ENCODE measurements at regions of chr3 and their contacts with region 1.

Region 1: DNA sequence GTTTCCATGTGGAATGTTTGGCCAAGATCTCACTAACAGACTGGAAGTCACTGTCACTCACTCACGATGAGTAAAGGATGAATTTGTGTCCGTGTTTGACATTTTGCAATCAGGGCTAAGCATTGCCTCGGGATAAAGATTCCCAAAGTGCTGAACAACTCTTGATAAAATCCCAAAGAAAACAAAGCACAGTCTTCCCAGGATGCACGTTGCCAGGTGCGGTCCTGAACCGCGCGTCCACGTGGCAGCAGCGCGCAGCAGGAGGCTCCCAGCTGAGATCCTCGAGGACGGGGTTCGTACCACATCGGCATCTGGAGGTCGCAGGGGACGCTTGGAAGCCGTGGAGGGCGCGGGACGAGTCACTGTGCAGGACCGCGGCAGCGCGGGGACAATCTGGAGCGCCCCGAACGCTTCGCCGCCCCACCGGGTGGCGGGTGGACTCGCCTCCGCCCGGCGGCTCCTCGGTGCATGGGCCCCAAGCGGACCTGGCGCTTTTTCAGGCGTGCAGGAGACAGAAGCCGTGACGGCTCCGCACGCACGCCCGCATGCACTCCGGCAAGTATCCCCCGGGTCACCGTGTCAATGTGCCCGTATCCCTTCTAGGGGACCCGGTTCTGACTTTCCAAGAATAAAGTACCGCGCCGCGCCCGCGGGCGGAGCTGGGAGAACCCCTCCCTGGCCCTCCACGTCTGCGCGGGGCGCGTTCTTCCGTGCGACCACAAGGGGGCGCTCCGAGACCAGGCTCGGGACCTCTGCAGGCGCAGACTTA is 17.7 kb downstream of the CPN2 start:
- DNase-seq: peak; percentile 78 to 94 (median 87)
- ATAC-seq: peak; percentile 98
- H3K4me3 ChIP-seq: peak overlapping the region; percentile 42
- H3K4me3 Mint-ChIP-seq: peak overlapping the region; percentile 60
- H3K27ac ChIP-seq: no peak overlapping the region
- H3K27ac Mint-ChIP-seq: no peak overlapping the region
- H3K4me1 ChIP-seq: peaks cover 10% of the 10 kb centered on the region
- H3K4me1 Mint-ChIP-seq: peaks cover 4% of the 10 kb centered on the region
- H3K27me3 ChIP-seq: peaks cover 6 to 17% of the 10 kb centered on the region in 2 experiments
- H3K27me3 Mint-ChIP-seq: peaks cover 36% of the 10 kb centered on the region
- CTCF ChIP-seq: peak; percentile 99

Region 2: DNA sequence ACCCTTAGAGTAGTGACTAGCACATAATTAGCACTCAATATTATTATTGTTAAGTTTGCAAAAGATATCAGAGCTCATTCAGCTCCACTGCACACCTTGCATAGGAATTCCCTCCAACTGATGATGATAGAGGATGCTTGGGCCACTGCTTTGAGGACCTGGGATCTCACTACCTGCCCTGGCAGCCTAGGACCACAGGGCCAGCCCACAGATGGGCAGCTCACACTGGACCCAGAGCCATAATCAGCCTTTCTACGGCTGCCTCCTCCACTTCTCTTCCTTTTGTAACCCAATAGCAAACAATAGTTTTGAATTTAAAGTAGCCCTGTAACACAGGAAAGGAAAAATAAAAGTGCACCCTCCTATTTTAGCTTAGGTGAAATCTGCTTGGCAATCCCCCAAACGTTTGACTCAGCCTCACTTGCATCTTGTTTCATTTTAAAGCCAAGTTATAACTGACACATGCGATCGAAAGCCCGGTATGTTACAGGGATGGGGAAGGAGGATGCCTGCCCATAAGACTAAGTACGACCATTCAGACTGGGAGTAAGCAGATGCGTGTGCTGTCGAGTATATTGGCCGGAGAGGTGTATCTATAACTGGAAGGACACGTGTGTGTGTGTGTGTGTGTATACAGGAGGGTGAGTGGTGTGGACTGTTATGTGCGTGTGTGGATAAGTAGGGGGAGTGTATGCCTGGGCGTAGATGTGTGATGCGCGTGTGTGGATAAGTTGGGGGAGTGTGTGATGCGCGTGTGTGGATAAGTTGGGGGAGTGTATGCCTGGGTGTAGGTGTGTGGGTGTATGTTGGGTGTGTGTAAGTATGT is 48.2 kb before region 1 on chr3:
- CTCF ChIA-PET with region 1: no interaction called
- POLR2A ChIA-PET with region 1: no interaction called
- intact Hi-C with region 1: no loop called
- DNase-seq: peak in 1 of 14 experiments; percentile 8
- ATAC-seq: no peak
- H3K4me3 ChIP-seq: no peak overlapping the region
- H3K4me3 Mint-ChIP-seq: no peak overlapping the region
- H3K27ac ChIP-seq: no peak overlapping the region
- H3K27ac Mint-ChIP-seq: no peak overlapping the region
- H3K4me1 ChIP-seq: no peaks in the 10 kb centered on the region
- H3K4me1 Mint-ChIP-seq: no peaks in the 10 kb centered on the region
- H3K27me3 ChIP-seq: peaks cover 0 to 4% of the 10 kb centered on the region in 2 experiments
- H3K27me3 Mint-ChIP-seq: peaks cover 5% of the 10 kb centered on the region
- CTCF ChIP-seq: no peak

Region 3: GRCh38 chr3:194344012-194344411 is 10.6 kb after region 1 on chr3:
- CTCF ChIA-PET with region 1: interaction called, 19 read pairs
- POLR2A ChIA-PET with region 1: no interaction called
- intact Hi-C with region 1: loop called in 1 of 2 experiments (anchors 1 kb)
- DNase-seq: peak; percentile 60 to 85 (median 66)
- ATAC-seq: peak; percentile 80
- H3K4me3 ChIP-seq: no peak overlapping the region
- H3K4me3 Mint-ChIP-seq: no peak overlapping the region
- H3K27ac ChIP-seq: no peak overlapping the region
- H3K27ac Mint-ChIP-seq: no peak overlapping the region
- H3K4me1 ChIP-seq: no peaks in the 10 kb centered on the region
- H3K4me1 Mint-ChIP-seq: no peaks in the 10 kb centered on the region
- H3K27me3 ChIP-seq: no peaks in the 10 kb centered on the region
- H3K27me3 Mint-ChIP-seq: peaks cover 14% of the 10 kb centered on the region
- CTCF ChIP-seq: peak; percentile 98

Region 4: GRCh38 chr3:194395778-194396547 is 62.6 kb after region 1 on chr3:
- CTCF ChIA-PET with region 1: interaction called, 13 read pairs
- POLR2A ChIA-PET with region 1: interaction called, 11 read pairs
- intact Hi-C with region 1: loop called in 1 of 2 experiments (anchors 2 kb)
- DNase-seq: peak; percentile 40 to 81 (median 62)
- ATAC-seq: peak; percentile 79
- H3K4me3 ChIP-seq: peak overlapping the region; percentile 63
- H3K4me3 Mint-ChIP-seq: peak overlapping the region; percentile 90
- H3K27ac ChIP-seq: peak overlapping the region in 1 of 2 donors; percentile 50
- H3K27ac Mint-ChIP-seq: peak overlapping the region; percentile 94
- H3K4me1 ChIP-seq: peaks cover 39% of the 10 kb centered on the region
- H3K4me1 Mint-ChIP-seq: peaks cover 56% of the 10 kb centered on the region
- H3K27me3 ChIP-seq: peaks cover 0 to 10% of the 10 kb centered on the region in 2 experiments
- H3K27me3 Mint-ChIP-seq: no peaks in the 10 kb centered on the region
- CTCF ChIP-seq: no peak

Region 5: GRCh38 chr3:194404365-194405140 is 71.2 kb after region 1 on chr3:
- CTCF ChIA-PET with region 1: interaction called, 23 read pairs
- POLR2A ChIA-PET with region 1: interaction called, 4 read pairs
- intact Hi-C with region 1: loop called (anchors 1 kb)
- DNase-seq: peak in 10 of 14 experiments; percentile 13 to 81 (median 28)
- ATAC-seq: peak; percentile 84
- H3K4me3 ChIP-seq: no peak overlapping the region
- H3K4me3 Mint-ChIP-seq: peak overlapping the region; percentile 6
- H3K27ac ChIP-seq: no peak overlapping the region
- H3K27ac Mint-ChIP-seq: no peak overlapping the region
- H3K4me1 ChIP-seq: peaks cover 4% of the 10 kb centered on the region
- H3K4me1 Mint-ChIP-seq: peaks cover 16% of the 10 kb centered on the region
- H3K27me3 ChIP-seq: no peaks in the 10 kb centered on the region
- H3K27me3 Mint-ChIP-seq: no peaks in the 10 kb centered on the region
- CTCF ChIP-seq: peak; percentile 90

Region 6: GRCh38 chr3:194465920-194466570 is 132.6 kb after region 1 on chr3:
- CTCF ChIA-PET with region 1: no interaction called
- POLR2A ChIA-PET with region 1: no interaction called
- intact Hi-C with region 1: no loop called
- DNase-seq: no peak
- ATAC-seq: no peak
- H3K4me3 ChIP-seq: no peak overlapping the region
- H3K4me3 Mint-ChIP-seq: no peak overlapping the region
- H3K27ac ChIP-seq: no peak overlapping the region
- H3K27ac Mint-ChIP-seq: no peak overlapping the region
- H3K4me1 ChIP-seq: peaks cover 9% of the 10 kb centered on the region
- H3K4me1 Mint-ChIP-seq: peaks cover 14% of the 10 kb centered on the region
- H3K27me3 ChIP-seq: no peaks in the 10 kb centered on the region
- H3K27me3 Mint-ChIP-seq: no peaks in the 10 kb centered on the region
- CTCF ChIP-seq: no peak

Region 7: DNA sequence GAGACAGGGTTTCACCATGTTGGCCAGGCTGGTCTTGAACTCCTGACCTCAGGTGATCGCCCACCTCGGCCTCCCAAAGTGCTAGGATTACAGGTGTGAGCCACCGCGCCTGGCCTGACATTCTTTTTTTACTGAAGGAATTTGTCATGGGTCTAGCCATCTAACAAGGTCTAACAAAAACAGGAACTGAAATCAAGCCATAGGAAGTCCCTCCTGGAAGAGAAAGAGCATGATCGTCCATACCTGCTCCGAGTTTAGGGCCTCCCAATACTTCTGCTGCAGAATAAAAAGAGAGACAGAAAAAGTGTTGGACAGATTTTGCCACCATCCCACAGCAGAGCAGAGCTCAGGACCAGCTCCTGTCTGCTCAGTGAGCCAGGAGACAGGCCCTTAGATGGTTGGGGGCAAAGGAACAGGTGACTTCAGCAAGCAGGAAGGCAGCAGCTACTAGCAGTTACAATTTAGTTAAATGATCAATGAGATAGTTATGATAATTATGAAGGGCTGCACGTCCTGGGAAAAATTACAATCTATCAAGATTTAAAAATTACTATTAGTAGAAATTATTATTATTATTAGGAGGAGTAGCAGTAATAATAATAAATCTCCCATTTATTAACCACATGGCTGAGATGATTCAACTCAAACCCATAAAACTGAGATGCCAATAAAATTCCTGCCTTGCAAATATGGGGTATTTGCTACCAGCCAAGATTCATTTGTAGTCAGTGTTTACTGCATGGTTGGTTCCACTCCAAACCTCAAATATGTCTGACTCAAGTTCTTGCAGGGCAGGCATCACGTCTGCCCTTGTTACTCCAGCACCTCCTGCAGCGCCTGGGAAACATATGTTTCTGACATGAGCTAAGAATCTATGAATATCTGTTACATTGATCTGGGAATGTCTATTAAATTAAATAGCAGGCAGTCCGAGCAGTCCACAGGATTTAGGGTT is 259.7 kb after region 1 on chr3:
- CTCF ChIA-PET with region 1: interaction called, 3 read pairs
- POLR2A ChIA-PET with region 1: no interaction called
- intact Hi-C with region 1: loop called (anchors 1 to 2 kb)
- DNase-seq: no peak
- ATAC-seq: no peak
- H3K4me3 ChIP-seq: no peak overlapping the region
- H3K4me3 Mint-ChIP-seq: no peak overlapping the region
- H3K27ac ChIP-seq: no peak overlapping the region
- H3K27ac Mint-ChIP-seq: no peak overlapping the region
- H3K4me1 ChIP-seq: no peaks in the 10 kb centered on the region
- H3K4me1 Mint-ChIP-seq: peaks cover 6% of the 10 kb centered on the region
- H3K27me3 ChIP-seq: no peaks in the 10 kb centered on the region
- H3K27me3 Mint-ChIP-seq: no peaks in the 10 kb centered on the region
- CTCF ChIP-seq: no peak

Region 8: DNA sequence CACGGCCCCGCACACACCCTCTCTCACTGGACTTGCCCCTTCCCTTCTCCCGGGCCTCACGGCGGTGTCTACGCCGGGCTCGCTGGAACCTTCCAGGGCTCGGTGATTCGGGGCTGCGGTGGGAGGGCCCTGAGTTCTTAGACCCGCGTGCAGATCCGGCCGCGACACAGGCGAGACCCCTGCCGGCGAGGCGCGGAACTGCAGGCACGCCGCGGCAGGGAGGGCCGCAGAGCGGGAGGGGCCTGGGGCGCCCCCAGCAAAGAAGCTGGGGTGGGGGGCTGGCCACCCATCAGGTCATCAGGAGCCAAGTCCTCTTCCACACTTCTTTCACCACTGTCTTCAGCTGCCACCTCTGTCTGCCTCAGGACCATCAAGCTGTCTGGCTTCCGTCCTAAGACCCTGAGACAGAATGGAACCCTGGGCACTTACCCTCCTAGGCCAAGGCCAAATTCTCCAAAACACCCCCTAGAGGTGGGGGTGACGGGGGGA is 773.1 kb after region 1 on chr3:
- CTCF ChIA-PET with region 1: no interaction called
- POLR2A ChIA-PET with region 1: no interaction called
- intact Hi-C with region 1: loop called in 1 of 2 experiments (anchors 5 kb)
- DNase-seq: peak; percentile 36 to 84 (median 60)
- ATAC-seq: peak; percentile 92
- H3K4me3 ChIP-seq: peak overlapping the region; percentile 6
- H3K4me3 Mint-ChIP-seq: no peak overlapping the region
- H3K27ac ChIP-seq: no peak overlapping the region
- H3K27ac Mint-ChIP-seq: no peak overlapping the region
- H3K4me1 ChIP-seq: peaks cover 8% of the 10 kb centered on the region
- H3K4me1 Mint-ChIP-seq: peaks cover 7% of the 10 kb centered on the region
- H3K27me3 ChIP-seq: no peaks in the 10 kb centered on the region
- H3K27me3 Mint-ChIP-seq: no peaks in the 10 kb centered on the region
- CTCF ChIP-seq: peak; percentile 99